Spleen (tissue), 13 donors: ENCODE measurements at regions of chr11 and their contacts with region 1.

Region 1: DNA sequence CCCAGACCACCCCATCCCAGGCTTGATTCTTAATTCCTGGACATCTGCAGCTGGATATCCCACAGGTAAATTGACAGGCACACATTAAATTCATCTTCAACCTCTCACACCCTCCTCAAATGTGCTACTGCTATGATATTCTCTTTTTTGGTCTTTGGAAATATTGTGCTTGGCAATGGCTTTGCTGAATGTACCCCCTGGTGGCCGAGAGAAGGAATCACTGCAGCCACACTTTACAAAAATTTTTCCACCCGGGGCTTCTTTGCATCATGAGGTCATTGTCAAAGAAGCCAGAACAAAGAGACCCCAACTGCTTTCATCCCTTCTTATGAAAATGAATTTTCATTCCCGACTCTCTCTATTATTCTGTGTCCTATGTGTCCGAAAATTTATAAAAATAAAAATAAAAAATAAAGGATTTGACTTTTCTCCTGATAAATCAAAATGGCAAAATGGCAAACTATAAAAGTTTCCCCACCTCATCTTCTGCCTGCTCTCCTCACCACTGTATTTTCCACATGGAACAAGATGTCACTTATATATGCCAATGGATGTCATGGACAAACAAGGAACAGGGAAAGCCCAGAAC is 15.0 kb upstream of the CYB5R2 start:
- DNase-seq: no peak
- H3K4me3 ChIP-seq: no peak overlapping the region
- H3K27ac ChIP-seq: no peak overlapping the region
- H3K4me1 ChIP-seq: no peaks in the 10 kb centered on the region
- H3K27me3 ChIP-seq: peaks cover 0 to 53% (median 10%) of the 10 kb centered on the region in 7 donors
- CTCF ChIP-seq: peak; percentile 32 to 78 (median 55)
- POLR2A ChIP-seq: no peak

Region 2: GRCh38 chr11:7571640-7572000 is 116.7 kb before region 1 on chr11:
- intact Hi-C with region 1: loop called (anchors 5 kb)
- DNase-seq: no peak
- H3K4me3 ChIP-seq: no peak overlapping the region
- H3K27ac ChIP-seq: peak overlapping the region in 1 of 8 donors; percentile 23
- H3K4me1 ChIP-seq: peaks cover 9 to 53% (median 27%) of the 10 kb centered on the region in 6 donors
- H3K27me3 ChIP-seq: peaks cover 0 to 58% (median 14%) of the 10 kb centered on the region in 7 donors
- CTCF ChIP-seq: peak; percentile 38 to 84 (median 74)
- POLR2A ChIP-seq: no peak